ENCODE measurements at regions of chr21 and their contacts with region 1.

Region 1: DNA sequence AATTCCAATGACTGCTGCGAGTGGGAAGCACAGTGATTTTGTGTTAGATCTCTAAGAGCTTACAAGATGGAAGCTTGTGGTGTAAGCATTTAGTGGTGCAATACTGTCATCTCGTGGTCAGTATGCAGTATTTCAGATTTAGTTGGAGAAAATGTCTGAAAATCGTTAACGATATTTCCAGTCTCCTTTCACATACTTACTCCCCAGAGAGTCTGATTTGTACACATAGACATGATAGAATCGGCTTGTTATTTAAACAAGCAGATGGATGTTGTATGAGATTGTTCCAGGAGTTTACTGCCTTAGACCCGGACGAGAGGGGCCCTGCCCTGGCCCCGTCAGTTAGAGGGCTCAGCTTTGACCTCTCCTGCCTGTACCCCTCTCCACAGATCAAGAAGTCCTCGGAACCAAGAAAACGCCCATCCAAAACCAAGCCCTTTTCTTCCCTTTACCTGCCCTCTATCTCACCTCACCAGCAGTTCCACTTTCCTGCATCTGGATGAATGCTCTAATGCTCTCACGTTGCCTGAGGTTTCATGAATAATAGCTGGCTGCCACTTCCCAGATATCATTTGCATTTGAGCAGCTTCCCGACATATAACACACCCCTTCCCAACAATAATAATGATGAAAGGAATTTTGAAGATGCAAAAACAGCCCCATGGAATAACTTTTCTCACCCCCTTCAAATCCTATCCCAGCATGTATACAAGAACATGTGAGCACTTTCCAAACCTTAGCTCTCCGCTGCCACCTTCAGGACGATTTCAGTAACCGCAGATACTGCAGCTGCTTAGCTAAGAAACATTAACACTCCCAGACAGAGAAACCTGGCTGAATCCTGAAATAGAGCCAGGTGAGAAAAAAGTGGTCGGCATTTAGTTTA is 247.3 kb downstream of the LTN1 start:
- DNase-seq: peak; percentile 84
- ATAC-seq: peak; percentile 90
- H3K4me3 Mint-ChIP-seq: no peak overlapping the region
- H3K27ac Mint-ChIP-seq: no peak overlapping the region
- H3K4me1 Mint-ChIP-seq: no peaks in the 10 kb centered on the region
- H3K27me3 Mint-ChIP-seq: no peaks in the 10 kb centered on the region

Region 2: GRCh38 chr21:26850108-26850643 is 1895.2 kb before region 1 on chr21:
- CTCF ChIA-PET with region 1: interaction called, 8 read pairs
- POLR2A ChIA-PET with region 1: no interaction called
- intact Hi-C with region 1: loop called (anchors 1 kb)
- DNase-seq: no peak
- ATAC-seq: no peak
- H3K4me3 Mint-ChIP-seq: no peak overlapping the region
- H3K27ac Mint-ChIP-seq: no peak overlapping the region
- H3K4me1 Mint-ChIP-seq: peaks cover 18% of the 10 kb centered on the region
- H3K27me3 Mint-ChIP-seq: peaks cover 39% of the 10 kb centered on the region

Region 3: GRCh38 chr21:28473530-28474220 is 271.7 kb before region 1 on chr21:
- CTCF ChIA-PET with region 1: interaction called, 10 read pairs
- POLR2A ChIA-PET with region 1: no interaction called
- intact Hi-C with region 1: no loop called
- DNase-seq: no peak
- ATAC-seq: peak; percentile 60
- H3K4me3 Mint-ChIP-seq: no peak overlapping the region
- H3K27ac Mint-ChIP-seq: no peak overlapping the region
- H3K4me1 Mint-ChIP-seq: no peaks in the 10 kb centered on the region
- H3K27me3 Mint-ChIP-seq: peaks cover 8% of the 10 kb centered on the region

Region 4: GRCh38 chr21:28579986-28580550 is 165.3 kb before region 1 on chr21:
- CTCF ChIA-PET with region 1: interaction called, 12 read pairs
- POLR2A ChIA-PET with region 1: no interaction called
- intact Hi-C with region 1: no loop called
- DNase-seq: no peak
- ATAC-seq: no peak
- H3K4me3 Mint-ChIP-seq: no peak overlapping the region
- H3K27ac Mint-ChIP-seq: no peak overlapping the region
- H3K4me1 Mint-ChIP-seq: no peaks in the 10 kb centered on the region
- H3K27me3 Mint-ChIP-seq: no peaks in the 10 kb centered on the region

Region 5: GRCh38 chr21:28763809-28764418 is 18.5 kb after region 1 on chr21:
- CTCF ChIA-PET with region 1: interaction called, 24 read pairs
- POLR2A ChIA-PET with region 1: no interaction called
- intact Hi-C with region 1: no loop called
- DNase-seq: no peak
- ATAC-seq: no peak
- H3K4me3 Mint-ChIP-seq: no peak overlapping the region
- H3K27ac Mint-ChIP-seq: no peak overlapping the region
- H3K4me1 Mint-ChIP-seq: peaks cover 20% of the 10 kb centered on the region
- H3K27me3 Mint-ChIP-seq: no peaks in the 10 kb centered on the region

Region 6: DNA sequence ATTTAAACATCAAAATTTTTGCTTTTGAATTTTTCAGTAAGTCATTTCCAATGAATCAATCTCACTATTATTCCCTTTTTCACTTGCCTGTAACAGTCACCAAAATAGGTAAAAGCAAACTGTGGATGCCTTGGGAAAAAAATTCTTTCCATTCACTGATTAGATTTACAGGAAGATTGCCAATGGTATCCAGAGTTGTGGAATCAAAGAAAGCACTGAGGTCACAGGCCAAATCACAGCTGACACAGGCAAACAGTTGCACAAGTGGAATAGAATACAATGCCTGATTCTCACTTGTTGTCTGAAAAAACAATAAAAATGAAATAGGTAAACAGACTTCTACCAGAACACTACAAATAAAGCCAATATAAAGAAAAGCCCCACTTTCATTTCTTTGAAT is 198.9 kb after region 1 on chr21:
- CTCF ChIA-PET with region 1: interaction called, 6 read pairs
- POLR2A ChIA-PET with region 1: no interaction called
- intact Hi-C with region 1: loop called (anchors 1 kb)
- DNase-seq: no peak
- ATAC-seq: no peak
- H3K4me3 Mint-ChIP-seq: no peak overlapping the region
- H3K27ac Mint-ChIP-seq: no peak overlapping the region
- H3K4me1 Mint-ChIP-seq: peaks cover 1% of the 10 kb centered on the region
- H3K27me3 Mint-ChIP-seq: no peaks in the 10 kb centered on the region